Caco-2 (cell line): ENCODE measurements at regions of chr7 and their contacts with region 1.

Region 1: GRCh38 chr7:12802098-12802497 is 114.7 kb downstream of the ARL4A start:
- DNase-seq: peak in 1 of 2 experiments; percentile 10
- H3K4me3 ChIP-seq: no peak overlapping the region
- H3K4me3 Mint-ChIP-seq: peak overlapping the region; percentile 4
- H3K27ac Mint-ChIP-seq: peak overlapping the region; percentile 71
- H3K4me1 ChIP-seq: peaks cover 44% of the 10 kb centered on the region
- H3K4me1 Mint-ChIP-seq: peaks cover 33% of the 10 kb centered on the region
- H3K27me3 ChIP-seq: no peaks in the 10 kb centered on the region
- H3K27me3 Mint-ChIP-seq: no peaks in the 10 kb centered on the region
- CTCF ChIP-seq: no peak

Region 2: DNA sequence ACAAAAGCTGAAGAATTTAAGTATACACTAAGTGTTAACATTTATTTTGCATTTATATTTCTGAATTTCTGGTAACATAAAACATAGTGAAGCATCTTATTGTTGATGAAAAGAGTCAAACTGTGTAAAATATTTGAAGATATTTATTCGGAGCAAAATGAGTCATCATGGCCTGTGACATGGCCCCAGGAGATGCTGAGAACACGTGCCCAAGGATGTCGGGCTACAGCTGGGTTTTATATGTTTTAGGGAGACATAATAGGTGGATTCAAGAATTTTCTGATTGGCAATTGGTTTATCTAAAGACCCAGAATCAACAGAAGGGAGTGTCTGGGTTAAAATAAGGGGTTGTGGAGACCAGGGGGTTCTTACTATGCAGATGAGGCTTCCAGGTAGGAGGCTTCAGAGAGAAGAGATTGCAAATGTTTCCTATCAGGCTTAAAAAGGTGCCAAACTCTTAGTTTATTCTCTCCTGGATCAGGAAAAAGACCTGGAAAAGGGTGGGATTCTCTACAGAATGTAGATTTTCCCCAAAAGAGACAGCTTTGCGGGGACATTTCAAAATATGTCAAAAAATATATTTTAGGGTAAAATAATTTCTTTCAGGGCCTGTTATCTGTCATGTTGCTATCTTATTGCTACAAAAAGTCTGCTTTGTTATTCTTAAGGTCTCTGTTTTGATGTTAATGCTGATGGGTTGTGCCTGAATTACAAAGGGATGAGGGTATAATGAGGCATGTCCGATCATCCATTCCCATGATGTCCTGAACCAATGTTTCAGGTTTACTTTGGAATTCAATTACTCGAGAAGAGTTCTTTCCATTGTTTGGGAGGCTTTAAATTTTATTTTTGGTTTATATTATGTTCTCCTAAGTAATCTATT is 473.0 kb before region 1 on chr7:
- CTCF ChIA-PET with region 1: no interaction called
- POLR2A ChIA-PET with region 1: no interaction called
- intact Hi-C with region 1: no loop called
- DNase-seq: no peak
- H3K4me3 ChIP-seq: no peak overlapping the region
- H3K4me3 Mint-ChIP-seq: no peak overlapping the region
- H3K27ac Mint-ChIP-seq: no peak overlapping the region
- H3K4me1 ChIP-seq: no peaks in the 10 kb centered on the region
- H3K4me1 Mint-ChIP-seq: no peaks in the 10 kb centered on the region
- H3K27me3 ChIP-seq: no peaks in the 10 kb centered on the region
- H3K27me3 Mint-ChIP-seq: no peaks in the 10 kb centered on the region
- CTCF ChIP-seq: no peak

Region 3: DNA sequence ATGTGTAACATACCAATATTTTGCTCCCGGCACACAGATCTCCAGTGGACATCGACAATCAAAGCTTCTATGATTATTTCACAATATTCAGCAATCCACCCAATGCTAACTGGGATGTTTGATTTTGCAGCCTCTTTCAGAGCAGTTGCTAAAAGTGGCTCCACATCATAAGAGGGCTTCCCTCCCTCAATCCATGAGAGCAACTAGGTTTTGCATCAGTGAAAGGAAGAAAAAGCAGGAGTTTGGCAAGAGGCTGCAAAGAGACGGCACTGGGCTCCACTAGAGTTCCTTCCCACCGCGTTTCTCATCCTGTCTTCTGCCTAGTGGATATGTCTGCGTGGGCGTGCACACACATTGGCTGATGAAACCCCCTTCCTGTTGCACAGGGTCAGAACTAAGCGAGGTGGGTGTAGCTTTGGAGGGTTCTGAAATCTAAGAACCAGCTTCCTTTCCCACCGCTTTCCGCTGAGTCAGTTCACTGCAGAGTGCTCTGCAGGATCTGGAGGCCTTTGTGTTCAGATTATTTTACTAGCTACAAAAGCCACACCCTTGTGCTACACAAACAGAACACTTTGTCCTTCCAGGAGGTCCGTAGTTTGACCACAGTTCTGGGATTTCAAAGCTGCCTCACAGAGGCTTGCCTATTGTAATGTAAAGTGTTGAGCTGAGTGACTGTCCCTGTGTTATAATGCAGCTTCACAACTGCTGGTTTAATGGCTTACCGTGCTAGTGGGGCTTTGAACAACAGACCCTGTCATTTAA is 86.5 kb before region 1 on chr7:
- CTCF ChIA-PET with region 1: no interaction called
- POLR2A ChIA-PET with region 1: no interaction called
- intact Hi-C with region 1: loop called (anchors 2 kb)
- DNase-seq: peak; percentile 49 to 56
- H3K4me3 ChIP-seq: no peak overlapping the region
- H3K4me3 Mint-ChIP-seq: peak overlapping the region; percentile 51
- H3K27ac Mint-ChIP-seq: peak overlapping the region; percentile 81
- H3K4me1 ChIP-seq: peaks cover 12% of the 10 kb centered on the region
- H3K4me1 Mint-ChIP-seq: peaks cover 20% of the 10 kb centered on the region
- H3K27me3 ChIP-seq: no peaks in the 10 kb centered on the region
- H3K27me3 Mint-ChIP-seq: no peaks in the 10 kb centered on the region
- CTCF ChIP-seq: no peak

Region 4: GRCh38 chr7:12821746-12822145 is 19.6 kb after region 1 on chr7:
- CTCF ChIA-PET with region 1: no interaction called
- POLR2A ChIA-PET with region 1: no interaction called
- intact Hi-C with region 1: loop called (anchors 2 kb)
- DNase-seq: no peak
- H3K4me3 ChIP-seq: no peak overlapping the region
- H3K4me3 Mint-ChIP-seq: no peak overlapping the region
- H3K27ac Mint-ChIP-seq: no peak overlapping the region
- H3K4me1 ChIP-seq: no peaks in the 10 kb centered on the region; the same call in 1 of the 2 replicates
- H3K4me1 Mint-ChIP-seq: peaks cover 16% of the 10 kb centered on the region
- H3K27me3 ChIP-seq: no peaks in the 10 kb centered on the region
- H3K27me3 Mint-ChIP-seq: no peaks in the 10 kb centered on the region
- CTCF ChIP-seq: no peak

Region 5: DNA sequence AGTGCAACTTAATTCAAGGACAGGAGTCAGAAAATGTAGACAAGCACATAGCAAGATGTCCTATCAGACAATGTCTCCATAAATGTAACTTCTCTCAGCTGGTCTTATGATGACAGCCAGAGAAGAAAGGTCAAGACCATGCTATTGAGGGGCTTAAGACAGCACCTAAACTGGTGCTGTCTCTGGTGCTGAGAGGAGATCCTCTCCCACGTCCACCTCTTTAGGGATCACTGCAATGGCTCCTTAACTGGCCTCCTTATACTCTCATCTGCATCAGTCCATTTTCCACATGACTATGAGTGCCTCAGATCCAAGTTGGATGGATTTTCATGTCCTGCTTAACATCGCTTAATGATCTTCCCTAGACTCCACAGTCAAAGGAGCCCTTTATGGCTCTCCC is 95.9 kb after region 1 on chr7:
- CTCF ChIA-PET with region 1: no interaction called
- POLR2A ChIA-PET with region 1: no interaction called
- intact Hi-C with region 1: loop called (anchors 2 kb)
- DNase-seq: no peak
- H3K4me3 ChIP-seq: no peak overlapping the region
- H3K4me3 Mint-ChIP-seq: no peak overlapping the region
- H3K27ac Mint-ChIP-seq: no peak overlapping the region
- H3K4me1 ChIP-seq: peaks cover 17% of the 10 kb centered on the region
- H3K4me1 Mint-ChIP-seq: peaks cover 20% of the 10 kb centered on the region
- H3K27me3 ChIP-seq: no peaks in the 10 kb centered on the region
- H3K27me3 Mint-ChIP-seq: no peaks in the 10 kb centered on the region
- CTCF ChIP-seq: no peak

Region 6: GRCh38 chr7:12942609-12943008 is 140.5 kb after region 1 on chr7:
- CTCF ChIA-PET with region 1: no interaction called
- POLR2A ChIA-PET with region 1: no interaction called
- intact Hi-C with region 1: loop called (anchors 5 kb)
- DNase-seq: peak; percentile 39 to 62
- H3K4me3 ChIP-seq: no peak overlapping the region
- H3K4me3 Mint-ChIP-seq: peak overlapping the region; percentile 21
- H3K27ac Mint-ChIP-seq: no peak overlapping the region
- H3K4me1 ChIP-seq: peaks cover 37% of the 10 kb centered on the region
- H3K4me1 Mint-ChIP-seq: peaks cover 44% of the 10 kb centered on the region
- H3K27me3 ChIP-seq: no peaks in the 10 kb centered on the region
- H3K27me3 Mint-ChIP-seq: no peaks in the 10 kb centered on the region
- CTCF ChIP-seq: no peak